ENCODE measurements at regions of chr12 and their contacts with region 1.

Region 1: DNA sequence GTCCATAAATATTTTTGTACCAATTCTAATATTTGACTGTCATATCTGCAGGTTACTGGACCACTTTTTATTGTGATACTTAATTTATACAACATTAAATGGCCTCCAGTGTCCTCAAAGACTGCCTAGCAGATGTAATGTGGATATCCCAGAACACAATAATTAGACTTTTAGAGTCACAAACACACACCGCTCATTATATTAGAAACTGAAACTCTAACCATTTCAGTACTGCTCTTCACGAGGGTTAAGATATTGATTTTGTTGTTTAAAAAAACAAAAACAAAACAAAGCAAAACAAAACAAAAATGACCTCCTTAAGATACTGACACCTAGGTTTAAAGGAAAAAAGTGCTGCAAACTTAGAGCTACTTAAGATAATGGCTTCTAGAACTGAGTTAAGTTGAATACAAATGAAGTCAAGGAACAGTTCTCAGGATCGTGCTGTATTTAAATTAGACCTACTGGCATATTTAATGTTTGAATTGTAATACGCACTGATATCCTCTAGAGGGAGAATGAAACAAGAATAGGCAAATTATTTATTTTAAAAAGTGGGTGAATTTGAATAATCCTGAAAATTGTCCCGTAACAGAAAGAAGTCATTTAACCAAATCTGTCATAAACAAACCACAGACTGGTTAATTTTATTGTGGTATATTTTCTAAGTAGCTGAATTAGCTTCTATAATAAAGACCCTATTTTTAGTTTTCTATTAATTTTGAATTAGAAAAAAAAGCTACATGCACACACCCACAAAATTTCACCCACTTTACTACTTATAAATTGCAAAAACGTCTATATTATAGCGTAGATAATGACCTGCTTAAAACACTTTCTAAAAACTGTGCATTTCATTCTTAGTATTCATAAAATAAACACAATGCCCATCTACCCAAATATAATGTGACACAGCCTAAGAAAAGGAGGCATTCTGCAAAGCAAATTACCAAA is 395.2 kb upstream of the DCN start:
- DNase-seq: peak; percentile 66
- ATAC-seq: no peak
- H3K4me3 ChIP-seq: peak overlapping the region; percentile 66
- H3K27ac ChIP-seq: peak overlapping the region; percentile 95
- H3K4me1 ChIP-seq: peaks cover 45% of the 10 kb centered on the region
- H3K27me3 ChIP-seq: no peaks in the 10 kb centered on the region
- CTCF ChIP-seq: peak; percentile 74

Region 2: GRCh38 chr12:91040096-91040755 is 537.6 kb before region 1 on chr12:
- CTCF ChIA-PET with region 1: no interaction called
- POLR2A ChIA-PET with region 1: no interaction called
- intact Hi-C with region 1: no loop called
- DNase-seq: no peak
- ATAC-seq: no peak
- H3K4me3 ChIP-seq: no peak overlapping the region
- H3K27ac ChIP-seq: no peak overlapping the region
- H3K4me1 ChIP-seq: no peaks in the 10 kb centered on the region
- H3K27me3 ChIP-seq: no peaks in the 10 kb centered on the region; the same call in 1 of the 2 replicates
- CTCF ChIP-seq: no peak

Region 3: GRCh38 chr12:91382081-91382543 is 195.8 kb before region 1 on chr12:
- CTCF ChIA-PET with region 1: no interaction called
- POLR2A ChIA-PET with region 1: no interaction called
- intact Hi-C with region 1: loop called (anchors 2 kb)
- DNase-seq: peak; percentile 90
- ATAC-seq: peak; percentile 84
- H3K4me3 ChIP-seq: peak overlapping the region; percentile 49
- H3K27ac ChIP-seq: 0 out of 2 replicates have a peak overlapping the region, but pooled peaks have one; percentile 6
- H3K4me1 ChIP-seq: peaks cover 6% of the 10 kb centered on the region; the same call in 1 of the 2 replicates
- H3K27me3 ChIP-seq: no peaks in the 10 kb centered on the region
- CTCF ChIP-seq: peak; percentile 94

Region 4: GRCh38 chr12:91778938-91779400 is 201.1 kb after region 1 on chr12:
- CTCF ChIA-PET with region 1: no interaction called
- POLR2A ChIA-PET with region 1: no interaction called
- intact Hi-C with region 1: loop called (anchors 2 kb)
- DNase-seq: peak; percentile 97
- ATAC-seq: peak; percentile 87
- H3K4me3 ChIP-seq: peak overlapping the region; percentile 38
- H3K27ac ChIP-seq: peak overlapping the region; percentile 99
- H3K4me1 ChIP-seq: peaks cover 47% of the 10 kb centered on the region
- H3K27me3 ChIP-seq: no peaks in the 10 kb centered on the region
- CTCF ChIP-seq: no peak

Region 5: GRCh38 chr12:91811481-91812287 is 233.8 kb after region 1 on chr12:
- CTCF ChIA-PET with region 1: interaction called, 5 read pairs
- POLR2A ChIA-PET with region 1: interaction called, 12 read pairs
- intact Hi-C with region 1: loop called (anchors 5 kb)
- DNase-seq: peak; percentile 72
- ATAC-seq: peak; percentile 53
- H3K4me3 ChIP-seq: no peak overlapping the region
- H3K27ac ChIP-seq: no peak overlapping the region
- H3K4me1 ChIP-seq: no peaks in the 10 kb centered on the region
- H3K27me3 ChIP-seq: no peaks in the 10 kb centered on the region
- CTCF ChIP-seq: peak; percentile 93

Region 6: GRCh38 chr12:91818227-91819131 is 240.6 kb after region 1 on chr12:
- CTCF ChIA-PET with region 1: no interaction called
- POLR2A ChIA-PET with region 1: no interaction called
- intact Hi-C with region 1: loop called (anchors 5 kb)
- DNase-seq: no peak
- ATAC-seq: no peak
- H3K4me3 ChIP-seq: no peak overlapping the region
- H3K27ac ChIP-seq: peak overlapping the region; percentile 35; the same call in 1 of the 2 replicates
- H3K4me1 ChIP-seq: peaks cover 19% of the 10 kb centered on the region
- H3K27me3 ChIP-seq: no peaks in the 10 kb centered on the region
- CTCF ChIP-seq: no peak

Region 7: DNA sequence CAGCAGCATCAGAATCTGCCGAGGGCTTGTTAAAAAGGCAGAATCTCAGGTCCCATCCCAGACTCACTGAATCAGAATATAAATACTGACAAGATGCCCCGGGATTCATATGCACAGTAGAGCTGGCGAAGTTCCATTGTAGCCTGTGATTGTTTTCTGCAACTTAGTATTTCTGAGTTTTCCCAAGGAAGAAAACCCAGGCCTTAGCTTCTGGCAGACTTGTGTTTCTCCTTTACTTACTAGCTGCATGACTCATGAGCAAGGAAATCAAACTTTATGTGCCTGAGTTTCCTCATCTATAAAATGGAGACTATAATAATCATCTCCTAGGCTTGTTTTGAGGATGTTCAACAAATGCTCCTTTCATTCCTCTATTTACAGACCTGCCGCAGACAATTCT is 846.5 kb after region 1 on chr12:
- CTCF ChIA-PET with region 1: no interaction called
- POLR2A ChIA-PET with region 1: no interaction called
- intact Hi-C with region 1: loop called (anchors 5 kb)
- DNase-seq: peak; percentile 78
- ATAC-seq: peak; percentile 83
- H3K4me3 ChIP-seq: no peak overlapping the region; the same call in 1 of the 2 replicates
- H3K27ac ChIP-seq: peak overlapping the region; percentile 66
- H3K4me1 ChIP-seq: peaks cover 35% of the 10 kb centered on the region
- H3K27me3 ChIP-seq: no peaks in the 10 kb centered on the region
- CTCF ChIP-seq: no peak

Region 8: DNA sequence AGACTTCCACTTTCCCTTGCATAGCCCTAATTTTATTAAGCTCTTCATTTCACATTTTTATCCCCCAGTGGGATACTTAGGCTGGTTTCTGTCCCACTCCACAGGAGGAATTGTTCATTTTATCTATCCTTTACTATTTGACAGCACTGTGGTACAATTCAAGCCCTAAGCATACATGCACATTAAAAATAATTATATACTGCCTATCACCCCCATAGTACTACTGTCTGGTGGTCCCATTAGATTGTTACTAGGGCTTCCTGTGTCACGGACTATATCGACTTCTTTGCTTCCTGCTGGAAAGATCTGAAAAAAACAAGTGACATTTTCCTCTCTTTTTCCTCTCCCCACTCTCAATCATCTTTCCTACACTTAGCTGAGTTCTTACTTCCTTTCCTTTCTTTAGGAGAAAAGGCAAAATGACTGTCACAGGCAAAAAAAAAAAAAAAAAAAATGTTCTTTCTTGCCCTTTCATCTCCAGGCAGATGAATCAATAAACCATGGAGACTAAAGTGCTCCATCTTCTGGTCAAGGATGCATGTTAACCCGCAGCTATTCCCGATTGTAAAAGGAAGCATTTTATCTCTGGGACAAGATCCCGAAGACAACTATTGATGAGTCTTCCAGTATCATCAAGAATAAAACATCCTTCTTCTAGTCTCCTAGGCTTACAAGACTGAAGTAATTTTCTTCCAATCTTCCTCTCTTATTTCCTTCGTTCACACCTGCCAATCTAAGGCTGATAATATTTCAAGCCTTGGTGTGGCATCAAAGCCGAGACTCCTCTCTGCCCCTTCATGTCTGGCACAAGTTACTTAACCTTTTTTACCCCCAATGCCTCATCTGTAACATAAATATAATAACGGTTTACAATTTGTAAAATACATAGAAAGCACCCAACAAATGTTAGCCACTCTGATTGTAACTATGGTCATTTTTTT is 1030.6 kb after region 1 on chr12:
- CTCF ChIA-PET with region 1: interaction called, 10 read pairs
- POLR2A ChIA-PET with region 1: no interaction called
- intact Hi-C with region 1: no loop called
- DNase-seq: peak; percentile 73
- ATAC-seq: peak; percentile 54
- H3K4me3 ChIP-seq: no peak overlapping the region
- H3K27ac ChIP-seq: no peak overlapping the region
- H3K4me1 ChIP-seq: peaks cover 9% of the 10 kb centered on the region; the same call in 1 of the 2 replicates
- H3K27me3 ChIP-seq: no peaks in the 10 kb centered on the region
- CTCF ChIP-seq: peak; percentile 85

Measured in PC-3 (cell line).